ENCODE measurements at regions of chr11 and their contacts with region 1.

Region 1: GRCh38 chr11:61332797-61333549 is at the starts of genes DDB1 and TKFC:
- DNase-seq: peak; percentile 98
- ATAC-seq: peak; percentile 94
- H3K4me3 Mint-ChIP-seq: peak within 1 kb of the TSS; percentile 81
- H3K27ac Mint-ChIP-seq: peak within 1 kb of the TSS; percentile 94
- H3K4me1 Mint-ChIP-seq: peaks cover 67% of the 10 kb centered on the region
- H3K27me3 Mint-ChIP-seq: no peaks in the 10 kb centered on the region
- total RNA-seq, gene DDB1: 202 to 214 TPM
- total RNA-seq, gene TKFC: 24.1 to 26.4 TPM

Region 2: GRCh38 chr11:61294717-61295595 is 38.0 kb before region 1 on chr11 and contains the start of gene VWCE:
- CTCF ChIA-PET with region 1: interaction called, 13 read pairs
- POLR2A ChIA-PET with region 1: interaction called, 3 read pairs
- DNase-seq: peak; percentile 84
- ATAC-seq: peak; percentile 87
- H3K4me3 Mint-ChIP-seq: peak within 1 kb of the TSS; percentile 79
- H3K27ac Mint-ChIP-seq: peak within 1 kb of the TSS; percentile 79
- H3K4me1 Mint-ChIP-seq: peaks cover 48% of the 10 kb centered on the region
- H3K27me3 Mint-ChIP-seq: no peaks in the 10 kb centered on the region
- total RNA-seq, gene VWCE: 2.2 to 3.3 TPM

Region 3: GRCh38 chr11:61361686-61362541 is 28.9 kb after region 1 on chr11 and contains the starts of genes CYB561A3 and TMEM138:
- CTCF ChIA-PET with region 1: interaction called, 105 read pairs
- POLR2A ChIA-PET with region 1: interaction called, 72 read pairs
- DNase-seq: peak; percentile 95
- ATAC-seq: peak; percentile 97
- H3K4me3 Mint-ChIP-seq: peak within 1 kb of the TSS; percentile 95
- H3K27ac Mint-ChIP-seq: peak within 1 kb of the TSS; percentile 94
- H3K4me1 Mint-ChIP-seq: peaks cover 37% of the 10 kb centered on the region
- H3K27me3 Mint-ChIP-seq: no peaks in the 10 kb centered on the region
- total RNA-seq, gene CYB561A3: 53.2 to 55.6 TPM
- total RNA-seq, gene TMEM138: 57.4 to 57.5 TPM

Region 4: DNA sequence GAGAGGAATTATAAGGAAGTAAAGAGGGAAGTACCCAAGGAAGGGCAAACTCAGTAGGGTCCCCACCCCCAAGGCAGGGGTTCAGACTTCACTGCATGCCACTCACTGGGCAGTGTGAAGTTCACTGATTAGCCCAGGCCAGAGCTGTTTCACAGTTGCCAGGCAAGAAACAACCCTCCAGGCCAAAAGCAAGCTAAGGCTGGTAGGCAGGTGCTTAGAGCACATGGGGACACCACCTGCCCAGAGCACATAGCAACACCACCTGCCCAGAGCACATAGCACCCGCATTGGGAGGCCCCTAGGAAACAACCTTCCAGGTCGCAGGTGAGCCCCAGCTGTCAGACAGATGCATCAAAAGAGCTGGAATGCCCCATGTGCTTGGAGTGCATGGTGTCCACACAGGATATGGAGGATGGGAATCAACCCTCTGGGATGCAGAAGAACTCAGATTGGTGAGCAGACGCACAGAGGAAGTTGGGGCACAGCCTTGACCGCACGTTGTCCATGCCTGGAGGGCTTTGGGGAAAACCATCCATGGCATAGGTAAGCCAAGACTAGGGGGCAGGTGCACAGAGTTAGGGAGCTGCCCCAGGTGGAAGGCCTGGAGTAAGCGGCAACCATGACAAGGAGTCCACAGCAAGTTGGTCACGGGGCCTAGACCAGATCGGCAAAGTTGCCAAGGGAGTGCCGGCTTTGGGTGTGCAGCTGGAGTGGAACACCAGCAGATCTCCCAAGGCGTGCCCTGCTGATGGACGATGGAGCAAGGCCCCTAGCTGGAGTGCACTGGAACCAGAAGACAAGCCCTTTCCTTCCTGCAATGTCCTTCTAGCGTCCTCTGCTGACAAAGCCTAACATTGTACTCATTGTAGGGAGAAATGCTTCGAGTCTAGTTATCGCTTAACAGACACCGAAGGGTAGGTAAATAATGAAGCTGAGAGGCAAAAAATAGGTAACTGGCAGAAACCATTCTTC is 51.6 kb after region 1 on chr11:
- CTCF ChIA-PET with region 1: interaction called, 390 read pairs
- POLR2A ChIA-PET with region 1: interaction called, 11 read pairs
- DNase-seq: no peak
- ATAC-seq: no peak
- H3K4me3 Mint-ChIP-seq: no peak overlapping the region
- H3K27ac Mint-ChIP-seq: no peak overlapping the region
- H3K4me1 Mint-ChIP-seq: peaks cover 7% of the 10 kb centered on the region
- H3K27me3 Mint-ChIP-seq: peaks cover 3% of the 10 kb centered on the region

Region 5: DNA sequence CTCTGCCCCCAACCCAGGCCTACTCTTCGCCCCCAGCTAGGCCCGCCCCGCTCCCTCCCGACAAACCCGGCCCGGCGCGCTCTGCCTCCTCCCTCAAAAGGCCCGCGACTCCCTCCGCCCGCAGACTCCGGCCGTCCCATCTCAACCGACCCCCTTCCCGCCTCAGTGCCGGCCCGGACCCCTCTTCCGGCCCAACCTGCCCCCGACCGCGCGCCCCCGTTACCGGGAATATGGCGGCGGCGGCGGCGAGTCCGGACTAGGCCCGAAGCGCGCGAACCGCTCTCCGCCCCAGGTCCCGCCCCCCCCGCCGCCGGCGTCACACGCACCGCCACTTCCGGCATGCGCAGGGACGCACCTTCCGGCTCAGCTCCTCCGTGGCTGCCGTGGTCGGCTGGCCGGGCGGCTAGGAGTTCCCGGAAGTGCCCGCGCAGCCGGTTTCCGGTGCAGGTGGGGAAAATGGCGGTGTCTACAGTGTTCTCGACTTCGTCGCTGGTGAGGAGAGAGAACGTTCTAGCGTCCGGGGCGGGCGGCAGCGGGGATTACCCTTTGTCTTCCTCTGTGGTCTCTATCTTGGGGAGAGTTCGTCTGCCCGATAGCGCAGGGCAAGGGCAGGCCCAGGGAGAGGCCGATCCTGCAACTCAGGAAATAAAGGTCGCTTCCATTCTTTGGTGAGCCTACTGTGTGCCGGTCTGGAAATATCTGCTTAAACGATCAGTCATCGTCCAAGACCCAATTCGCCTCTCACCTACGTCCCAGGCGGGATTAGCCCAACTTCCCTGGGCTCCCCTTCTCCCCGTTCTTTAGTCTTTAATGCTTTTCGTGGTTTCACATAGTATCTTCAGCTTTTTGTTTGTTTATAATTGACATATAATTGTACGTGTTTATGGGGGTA is 97.0 kb after region 1 on chr11 and contains the starts of genes CPSF7 and SDHAF2:
- CTCF ChIA-PET with region 1: interaction called, 68 read pairs
- POLR2A ChIA-PET with region 1: interaction called, 27 read pairs
- DNase-seq: peak; percentile 98
- ATAC-seq: peak; percentile 93
- H3K4me3 Mint-ChIP-seq: peak within 1 kb of the TSS; percentile 99
- H3K27ac Mint-ChIP-seq: peak within 1 kb of the TSS; percentile 100
- H3K4me1 Mint-ChIP-seq: peaks cover 56% of the 10 kb centered on the region
- H3K27me3 Mint-ChIP-seq: no peaks in the 10 kb centered on the region
- total RNA-seq, gene CPSF7: 94.8 to 98.4 TPM
- total RNA-seq, gene SDHAF2: 51.6 to 54.3 TPM